Posterior vena cava (tissue), 2 donors: ENCODE measurements at regions of chr6 and their contacts with region 1.

Region 1: GRCh38 chr6:2823104-2823850 is 18.4 kb downstream of the SERPINB1 start:
- DNase-seq: no peak

Region 2: GRCh38 chr6:2777250-2777649 is 46.0 kb before region 1 on chr6:
- intact Hi-C with region 1: loop called in 1 of 2 experiments (anchors 1 kb)
- DNase-seq: no peak